RWPE1 (cell line): ENCODE measurements at regions of chr10 and their contacts with region 1.

Region 1: GRCh38 chr10:6202684-6203330 is at the start of gene PFKFB3:
- DNase-seq: peak; percentile 97
- H3K27ac ChIP-seq: peak within 1 kb of the TSS; percentile 96
- CTCF ChIP-seq: peak; percentile 93

Region 2: GRCh38 chr10:5737352-5737751 is 465.5 kb before region 1 on chr10:
- CTCF ChIA-PET with region 1: no interaction called
- POLR2A ChIA-PET with region 1: no interaction called
- DNase-seq: no peak
- H3K27ac ChIP-seq: no peak overlapping the region
- CTCF ChIP-seq: no peak

Region 3: GRCh38 chr10:6101181-6101580 is 101.6 kb before region 1 on chr10:
- CTCF ChIA-PET with region 1: no interaction called
- POLR2A ChIA-PET with region 1: no interaction called
- DNase-seq: no peak
- H3K27ac ChIP-seq: no peak overlapping the region
- CTCF ChIP-seq: no peak

Region 4: GRCh38 chr10:6191147-6191546 is 11.7 kb before region 1 on chr10:
- CTCF ChIA-PET with region 1: interaction called, 12 read pairs
- POLR2A ChIA-PET with region 1: no interaction called
- DNase-seq: no peak
- H3K27ac ChIP-seq: no peak overlapping the region
- CTCF ChIP-seq: no peak

Region 5: DNA sequence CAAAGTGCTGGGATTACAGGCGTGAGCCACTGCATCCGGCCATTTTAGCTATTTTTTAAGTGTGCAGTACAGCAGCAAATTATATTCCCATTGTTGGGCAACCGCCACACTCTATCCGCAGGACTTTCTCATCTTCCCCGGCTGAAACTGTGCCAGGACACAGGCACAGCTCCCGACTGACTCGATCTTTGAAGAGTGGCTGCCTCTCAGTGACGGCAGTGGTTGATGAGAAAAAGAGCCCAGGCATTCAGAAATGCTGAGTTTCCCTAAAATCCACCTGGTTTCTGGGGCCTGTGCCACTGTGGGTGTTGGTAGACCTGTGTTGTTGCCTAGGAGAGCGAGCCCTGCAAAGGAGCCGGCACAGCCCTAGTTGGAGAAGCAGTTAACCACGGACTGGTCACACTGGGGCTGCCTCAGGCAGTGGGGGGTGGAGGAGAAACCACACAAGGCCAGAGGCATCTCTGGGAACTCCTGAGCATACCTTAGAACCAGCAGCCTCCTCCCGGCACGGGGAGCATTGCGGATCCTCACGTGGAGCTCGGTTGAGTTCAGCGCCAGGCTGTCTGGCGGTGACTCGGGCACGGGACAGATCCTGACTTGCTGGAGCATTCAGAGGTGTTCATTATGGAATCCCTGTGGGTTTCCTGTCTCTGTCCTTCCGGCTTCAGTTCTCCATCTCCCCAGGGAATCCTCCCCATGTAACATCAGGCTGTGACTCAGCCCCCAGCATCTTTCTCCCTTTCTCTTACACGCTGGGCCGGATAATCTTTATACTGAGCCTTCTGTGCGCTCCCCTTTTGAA is 16.1 kb after region 1 on chr10:
- CTCF ChIA-PET with region 1: interaction called, 11 read pairs
- POLR2A ChIA-PET with region 1: interaction called, 8 read pairs
- DNase-seq: peak; percentile 97
- H3K27ac ChIP-seq: peak overlapping the region; percentile 97
- CTCF ChIP-seq: no peak

Region 6: GRCh38 chr10:6232846-6233724 is 30.3 kb after region 1 on chr10:
- CTCF ChIA-PET with region 1: no interaction called
- POLR2A ChIA-PET with region 1: no interaction called
- DNase-seq: no peak
- H3K27ac ChIP-seq: peak overlapping the region; percentile 17
- CTCF ChIP-seq: no peak

Region 7: GRCh38 chr10:6401562-6402348 is 198.9 kb after region 1 on chr10:
- CTCF ChIA-PET with region 1: interaction called, 106 read pairs
- POLR2A ChIA-PET with region 1: interaction called, 15 read pairs
- DNase-seq: peak; percentile 91
- H3K27ac ChIP-seq: peak overlapping the region; percentile 69
- CTCF ChIP-seq: peak; percentile 82

Region 8: DNA sequence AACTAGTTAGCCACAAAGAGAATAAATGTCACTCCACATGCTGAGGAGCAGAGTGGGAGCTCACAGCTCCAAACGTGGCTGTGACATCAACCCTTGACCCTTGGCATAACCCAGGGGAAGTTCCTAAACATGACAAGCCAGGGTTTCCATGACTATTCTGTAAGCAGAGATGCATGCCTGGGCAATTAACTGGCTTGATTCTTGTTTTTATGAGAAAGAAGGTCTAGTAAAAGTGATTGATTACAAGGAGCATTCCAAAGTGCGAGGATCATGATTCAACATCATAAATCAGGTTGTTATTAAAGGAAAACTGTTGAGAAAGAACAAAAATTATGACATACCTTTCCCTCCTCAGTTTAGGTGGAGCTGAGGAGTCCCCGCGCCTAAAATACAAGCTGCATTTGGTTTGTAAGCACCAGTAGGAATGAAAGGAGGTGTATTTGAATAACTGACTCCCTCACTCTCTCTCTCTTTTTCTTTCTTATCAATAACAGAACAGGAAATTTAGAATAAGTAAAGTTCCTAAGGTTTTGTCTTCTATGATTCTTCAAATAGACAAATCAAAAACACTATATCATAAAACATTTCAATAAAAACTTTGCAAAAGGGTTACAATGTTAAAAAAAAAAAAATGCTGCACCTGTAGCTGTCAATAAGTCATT is 1099.7 kb after region 1 on chr10:
- CTCF ChIA-PET with region 1: no interaction called
- POLR2A ChIA-PET with region 1: no interaction called
- DNase-seq: peak; percentile 87
- H3K27ac ChIP-seq: no peak overlapping the region
- CTCF ChIP-seq: no peak